ENCODE measurements at regions of chr4 and their contacts with region 1.

Region 1: GRCh38 chr4:93897559-93897958 is 69.0 kb downstream of the ATOH1 start:
- DNase-seq: peak; percentile 3
- ATAC-seq: peak; percentile 66; the same call in 2 of the 3 replicates
- H3K4me3 ChIP-seq: no peak overlapping the region
- H3K27ac ChIP-seq: no peak overlapping the region
- H3K4me1 ChIP-seq: no peaks in the 10 kb centered on the region
- H3K27me3 ChIP-seq: no peaks in the 10 kb centered on the region
- CTCF ChIP-seq: 0 out of 2 replicates have a peak, but pooled peaks have one; percentile 19
- EP300 ChIP-seq: no peak
- POLR2A ChIP-seq: no peak
- RAD21 ChIP-seq: no peak

Region 2: GRCh38 chr4:93912146-93912545 is 14.6 kb after region 1 on chr4:
- CTCF ChIA-PET with region 1: no interaction called
- POLR2A ChIA-PET with region 1: no interaction called
- in situ Hi-C with region 1: no loop called
- intact Hi-C with region 1: no loop called
- DNase-seq: no peak
- ATAC-seq: no peak
- H3K4me3 ChIP-seq: no peak overlapping the region
- H3K27ac ChIP-seq: no peak overlapping the region
- H3K4me1 ChIP-seq: no peaks in the 10 kb centered on the region
- H3K27me3 ChIP-seq: no peaks in the 10 kb centered on the region
- CTCF ChIP-seq: no peak
- EP300 ChIP-seq: no peak
- POLR2A ChIP-seq: no peak
- RAD21 ChIP-seq: no peak

Region 3: GRCh38 chr4:94127707-94128328 is 230.3 kb after region 1 on chr4:
- CTCF ChIA-PET with region 1: no interaction called
- POLR2A ChIA-PET with region 1: no interaction called
- in situ Hi-C with region 1: no loop called
- intact Hi-C with region 1: loop called (anchors 1 kb)
- DNase-seq: peak; percentile 30
- ATAC-seq: no peak
- H3K4me3 ChIP-seq: no peak overlapping the region
- H3K27ac ChIP-seq: no peak overlapping the region
- H3K4me1 ChIP-seq: no peaks in the 10 kb centered on the region
- H3K27me3 ChIP-seq: no peaks in the 10 kb centered on the region
- CTCF ChIP-seq: peak; percentile 31
- EP300 ChIP-seq: no peak
- POLR2A ChIP-seq: no peak
- RAD21 ChIP-seq: no peak

Region 4: DNA sequence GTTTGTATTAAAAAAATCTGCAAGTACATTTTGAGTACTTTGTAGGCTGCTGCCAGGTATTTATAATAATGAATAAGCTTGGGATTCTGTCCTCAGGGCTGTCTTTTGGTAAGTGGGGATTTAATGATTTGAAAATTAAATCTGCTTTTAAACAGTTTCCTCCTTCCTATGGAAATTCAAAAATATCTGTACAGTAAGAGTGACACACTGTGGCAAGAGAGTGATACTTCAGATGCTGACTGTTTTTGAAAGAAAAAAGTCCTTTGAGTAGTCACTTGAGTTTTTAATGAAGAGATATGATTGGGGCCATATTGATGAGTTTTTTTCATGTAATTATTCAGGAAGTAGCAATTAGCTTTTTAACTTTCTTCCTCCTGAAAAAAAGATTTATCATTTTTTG is 359.3 kb after region 1 on chr4:
- CTCF ChIA-PET with region 1: no interaction called
- POLR2A ChIA-PET with region 1: no interaction called
- in situ Hi-C with region 1: no loop called
- intact Hi-C with region 1: loop called (anchors 5 kb)
- DNase-seq: peak; percentile 2
- ATAC-seq: 0 out of 3 replicates have a peak, but pooled peaks have one; percentile 36
- H3K4me3 ChIP-seq: no peak overlapping the region
- H3K27ac ChIP-seq: no peak overlapping the region
- H3K4me1 ChIP-seq: no peaks in the 10 kb centered on the region
- H3K27me3 ChIP-seq: no peaks in the 10 kb centered on the region
- CTCF ChIP-seq: peak; percentile 36; the same call in 1 of the 2 replicates
- EP300 ChIP-seq: no peak
- POLR2A ChIP-seq: no peak
- RAD21 ChIP-seq: no peak